OCI-LY7 (cell line): ENCODE measurements at regions of chr11 and their contacts with region 1.

Region 1: DNA sequence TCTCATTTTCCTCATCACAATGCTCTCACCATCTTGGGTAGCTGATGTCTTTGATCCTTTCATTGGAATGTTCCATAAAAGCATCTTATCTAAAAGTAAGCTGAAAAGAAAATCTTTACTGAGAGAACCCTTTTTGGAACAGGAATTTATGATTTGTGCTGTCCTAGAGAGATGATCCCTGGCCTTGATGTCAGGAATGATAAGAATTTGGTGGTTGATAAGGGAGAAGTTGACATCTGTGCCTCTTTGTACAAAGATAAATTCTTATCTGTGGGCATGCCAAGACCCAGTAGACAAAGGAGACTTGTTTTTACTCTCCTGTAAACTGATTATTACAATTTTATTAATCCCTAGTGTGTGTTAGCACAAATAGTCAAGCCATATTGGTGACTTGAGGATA is 36.9 kb downstream of the NAALAD2 start:
- DNase-seq: no peak
- H3K4me3 ChIP-seq: no peak overlapping the region
- H3K27ac ChIP-seq: no peak overlapping the region
- H3K4me1 ChIP-seq: no peaks in the 10 kb centered on the region
- CTCF ChIP-seq: no peak

Region 2: DNA sequence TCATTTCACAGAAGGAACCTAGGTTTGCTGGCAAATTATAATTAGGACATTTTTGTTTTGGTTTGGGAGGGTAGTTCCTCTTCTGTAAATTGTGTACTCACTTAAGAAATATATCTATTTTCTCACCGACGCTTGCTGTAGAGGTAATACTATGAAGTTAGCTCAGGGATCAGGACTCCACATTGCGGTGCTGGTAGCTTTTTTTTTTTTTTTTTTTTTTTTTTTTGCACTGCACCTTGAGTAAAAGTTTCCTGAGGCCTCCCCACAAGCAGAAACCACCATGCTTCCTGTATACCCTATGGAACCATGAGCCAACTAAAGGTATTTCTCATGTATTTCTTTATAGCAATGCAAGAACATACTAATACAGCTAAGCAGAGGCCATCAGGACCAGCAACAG is 70.9 kb before region 1 on chr11:
- CTCF ChIA-PET with region 1: no interaction called
- POLR2A ChIA-PET with region 1: interaction called, 3 read pairs
- intact Hi-C with region 1: loop called (anchors 10 kb)
- DNase-seq: no peak
- H3K4me3 ChIP-seq: no peak overlapping the region
- H3K27ac ChIP-seq: no peak overlapping the region
- H3K4me1 ChIP-seq: no peaks in the 10 kb centered on the region
- CTCF ChIP-seq: no peak

Region 3: GRCh38 chr11:91860661-91861060 is 1689.3 kb after region 1 on chr11:
- CTCF ChIA-PET with region 1: no interaction called
- POLR2A ChIA-PET with region 1: interaction called, 11 read pairs
- intact Hi-C with region 1: no loop called
- DNase-seq: no peak
- H3K4me3 ChIP-seq: no peak overlapping the region
- H3K27ac ChIP-seq: no peak overlapping the region
- H3K4me1 ChIP-seq: no peaks in the 10 kb centered on the region
- CTCF ChIP-seq: no peak